ENCODE measurements at regions of chr4 and their contacts with region 1.

Region 1: DNA sequence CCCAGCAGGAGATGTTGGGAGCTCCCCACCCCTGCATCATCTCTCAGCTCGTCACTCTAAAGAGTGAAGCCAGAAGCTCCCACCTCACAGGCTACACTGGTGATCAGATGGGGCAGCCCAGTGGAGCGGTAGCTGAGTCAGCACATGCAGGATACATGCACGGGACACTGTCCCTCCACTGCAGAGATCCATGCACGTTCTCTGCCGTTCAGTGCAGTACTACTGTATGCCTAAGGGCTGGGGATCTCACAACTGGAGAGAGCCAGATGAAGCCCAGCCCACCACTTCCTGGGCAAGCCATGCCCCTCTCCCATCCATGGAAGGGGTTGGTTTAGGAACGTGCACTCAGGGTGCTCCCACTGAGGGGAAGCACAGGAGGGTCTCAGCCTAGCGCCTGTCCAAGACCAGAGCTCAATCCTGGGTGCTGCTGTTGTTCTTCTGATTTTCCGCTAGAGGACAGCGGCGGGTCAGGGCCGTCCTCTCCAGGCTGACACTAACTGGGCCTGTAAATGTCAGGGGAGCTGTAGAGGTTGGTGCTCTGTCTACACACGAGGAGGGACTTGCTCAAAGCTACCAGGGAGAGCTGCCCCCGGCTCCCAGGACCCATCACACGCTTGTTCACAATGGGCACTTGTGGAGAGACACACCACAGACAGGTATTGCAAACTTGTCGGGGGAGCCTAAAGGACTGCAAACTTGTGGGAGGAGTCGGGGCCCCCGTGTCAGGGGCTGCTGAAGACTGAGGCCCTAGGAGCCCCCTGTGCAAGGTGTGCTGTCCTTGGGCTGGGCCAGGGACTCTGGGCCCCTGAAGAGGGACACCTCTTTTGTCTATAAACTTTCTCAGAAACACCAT is 18.2 kb upstream of the ABLIM2 start:
- DNase-seq: peak; percentile 45
- H3K4me3 ChIP-seq: no peak overlapping the region
- H3K27ac ChIP-seq: no peak overlapping the region
- H3K4me1 ChIP-seq: no peaks in the 10 kb centered on the region
- H3K27me3 ChIP-seq: no peaks in the 10 kb centered on the region
- CTCF ChIP-seq: peak; percentile 82 to 86
- POLR2A ChIP-seq: no peak

Region 2: DNA sequence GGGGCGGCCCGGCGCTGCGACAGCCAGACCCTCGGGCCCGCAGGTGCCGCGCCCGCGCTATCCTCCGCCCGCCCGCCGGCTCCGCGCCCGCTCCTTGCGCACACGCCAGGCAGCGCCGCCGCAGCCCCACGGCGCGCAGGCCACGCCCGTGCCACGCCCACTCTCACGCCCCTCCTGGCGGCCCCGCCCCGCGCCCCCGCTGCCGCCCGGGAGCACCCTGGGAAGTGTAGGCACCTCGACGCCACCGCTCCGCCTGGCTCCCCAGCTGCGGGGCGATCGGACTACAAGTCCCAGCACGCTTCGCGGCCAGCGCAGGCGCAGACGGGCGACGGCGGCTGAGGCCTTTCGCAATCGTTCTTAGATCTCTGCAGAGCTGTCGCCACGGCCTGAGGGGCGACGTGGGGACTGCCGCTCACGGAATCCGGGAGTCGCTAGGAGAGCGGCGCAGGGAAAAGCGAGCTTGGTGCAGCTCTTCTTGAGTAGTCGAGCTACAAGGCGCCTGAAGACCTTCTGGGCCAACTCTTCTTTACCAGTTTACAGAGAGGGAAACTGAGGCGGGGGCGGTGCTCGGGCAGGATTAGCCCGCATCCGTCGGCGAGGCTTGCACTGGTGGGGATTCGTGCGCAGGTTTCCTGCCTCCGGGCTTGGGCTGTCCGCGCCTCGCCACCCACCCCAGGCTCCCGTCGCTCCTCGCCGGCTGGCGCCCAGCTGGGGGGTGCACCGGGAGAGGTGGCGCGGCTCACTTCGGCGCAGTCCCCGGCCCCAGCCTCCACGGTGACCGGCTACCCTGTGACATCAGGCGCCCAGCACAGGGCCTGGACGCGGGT is 17.9 kb before region 1 on chr4 and contains the start of gene ABLIM2:
- CTCF ChIA-PET with region 1: interaction called, 12 read pairs
- POLR2A ChIA-PET with region 1: interaction called, 4 read pairs
- dilution Hi-C with region 1: no loop called
- intact Hi-C with region 1: no loop called
- DNase-seq: peak; percentile 97
- H3K4me3 ChIP-seq: peak within 1 kb of the TSS; percentile 21 to 70 (median 51)
- H3K27ac ChIP-seq: no peak within 1 kb of the TSS
- H3K4me1 ChIP-seq: peaks cover 11% of the 10 kb centered on the region
- H3K27me3 ChIP-seq: peaks cover 16 to 17% of the 10 kb centered on the region in 2 experiments
- CTCF ChIP-seq: no peak
- POLR2A ChIP-seq: peak; percentile 59
- total RNA-seq, gene ABLIM2: 0.30 and 0.66 TPM in 2 replicates

Region 3: GRCh38 chr4:8198906-8199593 is 22.3 kb after region 1 on chr4 and contains the start of gene SH3TC1:
- CTCF ChIA-PET with region 1: interaction called, 196 read pairs
- POLR2A ChIA-PET with region 1: interaction called, 4 read pairs
- dilution Hi-C with region 1: no loop called
- intact Hi-C with region 1: no loop called
- DNase-seq: peak; percentile 94
- H3K4me3 ChIP-seq: peak within 1 kb of the TSS; percentile 72 to 77 (median 76)
- H3K27ac ChIP-seq: peak within 1 kb of the TSS; percentile 82
- H3K4me1 ChIP-seq: peaks cover 63% of the 10 kb centered on the region
- H3K27me3 ChIP-seq: no peaks in the 10 kb centered on the region
- CTCF ChIP-seq: no peak
- POLR2A ChIP-seq: peak; percentile 95
- total RNA-seq, gene SH3TC1: 174 and 192 TPM in 2 replicates

Region 4: DNA sequence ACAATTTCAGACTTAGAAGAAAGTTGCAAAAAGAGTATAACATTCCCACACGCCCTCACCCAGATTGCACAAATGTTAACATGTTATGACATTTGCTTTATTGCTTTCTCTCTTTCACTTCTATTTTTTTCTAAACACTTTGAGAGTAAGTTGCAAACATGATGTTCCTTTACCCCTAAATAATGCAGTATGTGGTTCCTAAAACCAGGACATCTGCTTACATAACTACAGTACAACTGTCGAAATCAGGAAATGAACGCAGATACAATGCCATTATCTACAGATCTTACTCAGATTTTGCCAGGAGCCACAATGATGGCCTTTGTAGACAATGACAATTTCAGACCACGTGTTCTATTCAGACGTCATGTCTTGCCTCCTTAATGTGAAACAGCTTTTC is 44.7 kb after region 1 on chr4:
- CTCF ChIA-PET with region 1: interaction called, 29 read pairs
- POLR2A ChIA-PET with region 1: no interaction called
- dilution Hi-C with region 1: no loop called
- intact Hi-C with region 1: no loop called
- DNase-seq: no peak
- H3K4me3 ChIP-seq: no peak overlapping the region
- H3K27ac ChIP-seq: no peak overlapping the region
- H3K4me1 ChIP-seq: no peaks in the 10 kb centered on the region
- H3K27me3 ChIP-seq: no peaks in the 10 kb centered on the region
- CTCF ChIP-seq: no peak
- POLR2A ChIP-seq: no peak

Region 5: DNA sequence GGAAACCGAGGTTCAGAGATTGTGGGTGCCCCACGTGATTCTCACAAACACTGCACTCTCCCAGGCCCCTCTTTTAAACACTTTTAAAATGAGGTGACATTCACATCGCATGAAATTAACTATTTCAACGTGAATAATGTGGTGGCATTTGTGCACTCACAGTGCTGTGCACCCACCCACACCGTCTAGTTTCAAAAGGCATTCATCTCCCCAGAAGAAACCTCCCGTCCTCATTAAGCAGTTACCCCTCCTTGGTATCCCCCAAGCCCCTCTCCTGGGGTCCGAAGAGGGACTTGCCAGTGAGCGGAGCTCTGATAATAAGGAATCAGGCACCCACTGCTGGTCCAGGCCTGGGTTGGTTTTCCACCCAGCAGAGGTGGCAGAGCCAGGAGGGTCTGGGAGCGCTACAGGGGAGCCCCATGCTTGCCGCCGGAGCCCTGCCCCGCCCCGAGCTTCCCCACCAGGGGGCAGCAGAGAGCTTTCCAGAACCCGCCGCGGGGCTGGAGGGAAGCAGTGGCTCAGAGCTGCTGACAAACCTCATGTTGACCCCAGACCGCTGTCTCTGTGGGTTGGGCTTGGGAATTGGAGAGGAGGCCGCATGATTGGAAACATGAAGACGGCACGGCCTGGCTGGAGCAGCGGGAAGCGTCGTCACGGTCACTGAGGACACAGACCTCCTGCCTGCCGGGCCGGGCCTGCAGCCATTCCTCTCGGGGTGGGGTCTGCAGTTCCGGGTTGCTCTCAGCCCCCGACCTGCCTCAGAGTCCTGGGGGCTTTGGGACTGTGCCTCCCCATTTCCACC is 65.3 kb after region 1 on chr4:
- CTCF ChIA-PET with region 1: interaction called, 15 read pairs
- POLR2A ChIA-PET with region 1: no interaction called
- dilution Hi-C with region 1: no loop called
- intact Hi-C with region 1: loop called (anchors 2 kb)
- DNase-seq: peak; percentile 71
- H3K4me3 ChIP-seq: no peak overlapping the region
- H3K27ac ChIP-seq: peak overlapping the region; percentile 36
- H3K4me1 ChIP-seq: no peaks in the 10 kb centered on the region
- H3K27me3 ChIP-seq: no peaks in the 10 kb centered on the region
- CTCF ChIP-seq: peak; percentile 94 to 98
- POLR2A ChIP-seq: no peak

Region 6: DNA sequence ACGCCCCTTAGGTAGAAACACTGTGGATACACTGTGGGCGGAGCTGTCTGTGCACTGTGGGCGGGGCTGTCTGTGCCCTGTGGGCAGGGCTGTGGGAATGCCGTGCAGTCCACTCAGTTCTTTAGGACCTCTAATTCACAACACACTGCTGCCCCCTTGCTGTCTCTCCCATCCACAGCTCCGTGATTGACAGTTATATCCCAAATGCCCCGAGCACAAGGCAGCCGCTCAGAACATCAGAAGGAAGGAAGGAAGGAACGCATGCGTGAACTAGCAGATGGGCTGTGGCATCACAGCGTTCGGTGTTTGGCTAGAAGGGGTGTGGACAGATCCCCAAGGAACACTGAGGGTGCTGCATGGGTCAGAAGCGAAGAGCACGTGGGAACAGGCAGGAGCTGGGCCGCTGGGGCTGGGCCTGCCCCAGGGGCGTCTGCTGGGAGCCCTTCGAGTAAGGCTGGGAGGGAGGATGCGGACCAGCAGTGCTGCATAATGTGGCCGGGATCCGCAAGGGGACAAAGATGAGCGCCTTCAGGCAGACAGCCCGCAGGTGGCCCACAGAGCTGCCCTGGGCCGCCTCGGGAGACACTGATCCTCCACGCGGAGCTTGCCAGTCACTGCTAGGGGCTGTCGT is 234.0 kb after region 1 on chr4:
- CTCF ChIA-PET with region 1: interaction called, 19 read pairs
- POLR2A ChIA-PET with region 1: no interaction called
- dilution Hi-C with region 1: no loop called
- intact Hi-C with region 1: no loop called
- DNase-seq: peak; percentile 94
- H3K4me3 ChIP-seq: no peak overlapping the region
- H3K27ac ChIP-seq: no peak overlapping the region
- H3K4me1 ChIP-seq: no peaks in the 10 kb centered on the region
- H3K27me3 ChIP-seq: no peaks in the 10 kb centered on the region
- CTCF ChIP-seq: peak; percentile 63 to 72
- POLR2A ChIP-seq: no peak